ENCODE measurements at regions of chr1 and their contacts with region 1.

Region 1: DNA sequence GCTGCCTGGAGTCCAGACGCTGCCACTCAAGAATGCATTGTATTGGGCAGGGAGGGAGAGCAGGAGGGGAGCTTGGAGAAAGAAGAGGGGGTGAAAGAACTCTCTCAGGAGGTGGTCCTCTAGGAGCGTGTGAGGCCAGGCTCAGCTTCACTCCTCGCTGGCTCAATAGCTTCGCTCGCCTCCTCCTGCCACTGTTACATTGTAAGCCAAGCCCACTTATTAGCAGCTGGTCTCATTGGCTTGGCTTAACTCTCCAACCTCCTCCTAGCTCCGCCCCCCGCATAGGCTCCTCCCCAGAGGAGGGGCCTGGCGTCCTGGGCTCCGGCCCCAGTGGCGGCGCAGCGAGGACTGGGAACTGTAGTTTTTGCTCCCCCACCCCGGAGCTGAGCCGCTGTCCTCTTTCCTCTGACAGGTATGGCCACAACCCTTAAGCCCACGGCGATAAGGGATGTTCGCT is at the start of gene KCNN3:
- DNase-seq: peak; percentile 90 to 92 (median 91)
- ATAC-seq: peak; percentile 98
- H3K4me3 ChIP-seq: no peak within 1 kb of the TSS
- H3K4me1 ChIP-seq: no peaks in the 10 kb centered on the region
- CTCF ChIP-seq: no peak
- total RNA-seq, gene KCNN3: 1.5 to 19.3 (median 2.0) TPM

Region 2: DNA sequence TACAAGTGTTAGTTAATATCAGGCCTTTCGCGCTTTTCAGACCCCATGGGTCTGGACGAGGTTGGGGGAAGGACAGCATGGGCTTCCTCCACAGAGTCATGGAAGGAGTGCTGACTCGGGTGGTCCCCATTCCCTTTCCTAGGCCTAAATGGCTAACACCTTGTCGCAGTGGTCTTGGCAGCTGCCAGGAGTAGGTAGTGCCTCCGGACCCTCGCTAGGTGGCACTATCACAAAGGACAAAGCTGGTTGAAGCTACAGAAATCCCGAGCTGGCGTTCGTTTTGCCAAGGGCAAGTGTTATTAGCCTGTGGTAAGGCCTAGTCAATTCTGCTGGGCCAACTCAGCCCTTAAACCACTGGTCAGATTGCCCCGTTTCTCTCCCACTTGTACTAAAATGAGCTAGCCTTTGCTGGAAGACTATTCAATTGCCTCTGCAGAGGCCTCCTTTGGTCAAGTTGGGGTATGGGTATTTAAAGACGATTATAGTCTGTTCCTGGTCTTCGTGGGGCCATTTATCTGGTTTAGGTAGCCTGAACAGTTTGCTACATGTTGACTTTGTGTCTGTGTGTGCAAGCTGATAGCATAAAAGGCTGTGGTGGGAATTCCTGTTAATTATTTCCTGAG is 310.6 kb before region 1 on chr1:
- intact Hi-C with region 1: loop called in 1 of 2 experiments (anchors 10 kb)
- DNase-seq: peak; percentile 82 to 86 (median 85)
- ATAC-seq: peak; percentile 78
- H3K4me3 ChIP-seq: peak overlapping the region; percentile 90
- H3K4me1 ChIP-seq: peaks cover 26% of the 10 kb centered on the region
- CTCF ChIP-seq: peak; percentile 82

Region 3: DNA sequence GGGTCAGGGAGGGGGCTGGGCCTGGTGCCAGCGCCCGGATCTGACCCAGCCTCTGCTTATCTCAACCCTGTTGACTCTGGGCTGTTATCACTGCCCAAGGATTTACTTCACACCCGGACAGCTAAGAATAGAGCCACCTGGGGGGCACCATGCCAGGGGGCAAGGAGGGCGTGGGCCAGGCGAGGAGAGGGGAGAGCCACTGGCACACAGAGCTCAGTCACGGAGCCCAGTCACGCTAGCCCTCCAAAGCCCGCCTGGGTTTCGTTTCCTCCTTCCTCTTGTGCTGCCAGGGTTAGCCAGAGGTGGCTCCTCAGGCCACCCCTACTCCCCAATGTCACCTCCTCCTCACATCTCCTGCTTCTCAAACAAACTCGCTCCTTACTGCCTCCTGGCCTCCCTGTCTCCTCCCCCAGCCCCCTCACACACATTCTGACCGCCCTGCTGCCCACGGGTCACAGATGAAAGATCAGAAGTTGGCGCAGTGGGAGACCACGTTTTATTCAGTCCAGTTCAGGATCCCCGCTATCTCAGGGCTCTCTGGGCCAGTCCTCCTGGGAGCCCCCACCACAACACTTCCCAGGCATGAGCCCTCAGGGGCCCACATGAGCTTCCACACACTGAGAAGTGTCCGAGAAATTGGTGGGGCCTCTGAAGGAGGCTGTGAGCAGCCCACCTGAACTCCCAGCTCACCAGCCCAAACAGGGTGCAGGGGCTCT is 315.4 kb after region 1 on chr1:
- intact Hi-C with region 1: no loop called
- DNase-seq: peak in 2 of 3 donors; percentile 72 to 80
- ATAC-seq: peak; percentile 72
- H3K4me3 ChIP-seq: no peak overlapping the region
- H3K4me1 ChIP-seq: peaks cover 20% of the 10 kb centered on the region
- CTCF ChIP-seq: no peak

Measured in mucosa of descending colon (tissue), 3 donors.